CD8-positive, alpha-beta T cell (primary cell): ENCODE measurements at regions of chr4 and their contacts with region 1.

Region 1: DNA sequence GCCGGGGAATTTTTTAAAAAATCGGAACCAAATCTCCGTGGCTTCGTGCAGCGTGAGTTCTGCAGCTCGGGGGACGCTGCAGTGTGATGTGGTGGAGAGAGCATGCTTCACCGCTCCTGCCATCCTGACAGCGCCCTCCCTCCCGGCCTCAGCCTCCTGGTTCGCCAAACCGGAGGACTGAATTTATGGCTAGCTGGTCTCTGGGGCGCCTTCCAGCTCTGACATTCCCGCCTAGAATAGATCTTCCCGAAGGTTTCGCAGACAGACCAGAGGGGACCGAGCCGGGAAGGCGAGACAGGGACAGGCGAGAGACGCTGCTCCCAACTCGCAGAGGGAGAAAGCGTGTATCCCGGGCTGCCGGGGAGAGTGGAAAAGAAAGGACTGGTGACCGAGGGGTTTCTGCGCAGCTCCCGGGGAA is 25.9 kb downstream of the HOPX start:
- DNase-seq: peak in 5 of 9 experiments; percentile 17 to 62 (median 43)
- ATAC-seq: no peak
- H3K4me3 ChIP-seq: peak overlapping the region; percentile 61 to 78
- H3K4me3 Mint-ChIP-seq: peak overlapping the region; percentile 90
- H3K27ac ChIP-seq: peak overlapping the region in 1 of 2 experiments; percentile 73
- H3K27ac Mint-ChIP-seq: peak overlapping the region; percentile 41
- H3K4me1 ChIP-seq: peaks cover 28% of the 10 kb centered on the region
- H3K4me1 Mint-ChIP-seq: peaks cover 56% of the 10 kb centered on the region
- H3K27me3 ChIP-seq: no peaks in the 10 kb centered on the region
- H3K27me3 Mint-ChIP-seq: peaks cover 10% of the 10 kb centered on the region
- CTCF ChIP-seq: no peak

Region 2: GRCh38 chr4:56410235-56411062 is 244.8 kb before region 1 on chr4:
- CTCF ChIA-PET with region 1: no interaction called
- POLR2A ChIA-PET with region 1: no interaction called
- intact Hi-C with region 1: no loop called
- DNase-seq: no peak
- ATAC-seq: no peak
- H3K4me3 ChIP-seq: no peak overlapping the region
- H3K4me3 Mint-ChIP-seq: no peak overlapping the region
- H3K27ac ChIP-seq: no peak overlapping the region
- H3K27ac Mint-ChIP-seq: no peak overlapping the region
- H3K4me1 ChIP-seq: no peaks in the 10 kb centered on the region
- H3K4me1 Mint-ChIP-seq: peaks cover 14% of the 10 kb centered on the region
- H3K27me3 ChIP-seq: no peaks in the 10 kb centered on the region
- H3K27me3 Mint-ChIP-seq: no peaks in the 10 kb centered on the region
- CTCF ChIP-seq: no peak

Region 3: GRCh38 chr4:56424697-56425514 is 230.3 kb before region 1 on chr4:
- CTCF ChIA-PET with region 1: interaction called, 4 read pairs
- POLR2A ChIA-PET with region 1: no interaction called
- intact Hi-C with region 1: loop called (anchors 10 kb)
- DNase-seq: peak in 7 of 9 experiments; percentile 21 to 71 (median 52)
- ATAC-seq: peak; percentile 61
- H3K4me3 ChIP-seq: no peak overlapping the region
- H3K4me3 Mint-ChIP-seq: no peak overlapping the region
- H3K27ac ChIP-seq: no peak overlapping the region
- H3K27ac Mint-ChIP-seq: no peak overlapping the region
- H3K4me1 ChIP-seq: no peaks in the 10 kb centered on the region
- H3K4me1 Mint-ChIP-seq: peaks cover 8% of the 10 kb centered on the region
- H3K27me3 ChIP-seq: no peaks in the 10 kb centered on the region
- H3K27me3 Mint-ChIP-seq: no peaks in the 10 kb centered on the region
- CTCF ChIP-seq: peak; percentile 90

Region 4: GRCh38 chr4:56575820-56576429 is 79.3 kb before region 1 on chr4:
- CTCF ChIA-PET with region 1: interaction called, 7 read pairs
- POLR2A ChIA-PET with region 1: interaction called, 3 read pairs
- intact Hi-C with region 1: loop called in 1 of 2 experiments (anchors 2 kb)
- DNase-seq: peak in 2 of 9 experiments; percentile 35 to 52
- ATAC-seq: peak; percentile 36
- H3K4me3 ChIP-seq: no peak overlapping the region
- H3K4me3 Mint-ChIP-seq: no peak overlapping the region
- H3K27ac ChIP-seq: no peak overlapping the region
- H3K27ac Mint-ChIP-seq: no peak overlapping the region
- H3K4me1 ChIP-seq: no peaks in the 10 kb centered on the region
- H3K4me1 Mint-ChIP-seq: no peaks in the 10 kb centered on the region
- H3K27me3 ChIP-seq: no peaks in the 10 kb centered on the region
- H3K27me3 Mint-ChIP-seq: peaks cover 2% of the 10 kb centered on the region
- CTCF ChIP-seq: peak; percentile 15

Region 5: GRCh38 chr4:56630876-56631666 is 24.1 kb before region 1 on chr4:
- CTCF ChIA-PET with region 1: no interaction called
- POLR2A ChIA-PET with region 1: no interaction called
- intact Hi-C with region 1: no loop called
- DNase-seq: no peak
- ATAC-seq: no peak
- H3K4me3 ChIP-seq: no peak overlapping the region
- H3K4me3 Mint-ChIP-seq: no peak overlapping the region
- H3K27ac ChIP-seq: no peak overlapping the region
- H3K27ac Mint-ChIP-seq: no peak overlapping the region
- H3K4me1 ChIP-seq: no peaks in the 10 kb centered on the region
- H3K4me1 Mint-ChIP-seq: no peaks in the 10 kb centered on the region
- H3K27me3 ChIP-seq: no peaks in the 10 kb centered on the region
- H3K27me3 Mint-ChIP-seq: peaks cover 2% of the 10 kb centered on the region
- CTCF ChIP-seq: no peak

Region 6: DNA sequence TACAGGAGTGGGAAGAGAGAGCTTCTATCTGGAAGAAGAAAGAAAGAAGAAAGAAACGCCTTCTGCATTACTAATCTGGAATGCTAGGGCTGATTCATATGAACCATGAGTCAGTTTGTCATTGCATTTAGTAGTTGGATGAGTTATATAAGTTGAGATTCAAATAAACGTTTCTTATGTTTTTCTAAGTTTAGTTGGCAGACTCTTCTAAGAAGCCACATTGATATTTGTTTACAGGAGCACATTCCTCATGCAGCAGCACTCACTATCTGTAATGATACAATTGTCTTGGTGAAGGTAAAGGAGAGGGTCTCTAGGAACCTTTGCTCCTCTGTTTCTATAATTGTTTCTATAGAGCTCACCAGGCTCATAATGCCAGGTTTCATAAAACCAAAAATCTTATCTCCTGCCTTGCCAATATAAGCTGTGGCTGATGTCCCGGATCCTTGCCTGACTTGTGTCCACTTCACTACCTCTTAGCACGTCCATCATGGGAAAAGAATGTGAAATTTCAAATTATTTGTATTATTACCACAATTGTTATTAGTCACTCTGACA is 13.6 kb before region 1 on chr4:
- CTCF ChIA-PET with region 1: interaction called, 12 read pairs
- POLR2A ChIA-PET with region 1: no interaction called
- intact Hi-C with region 1: no loop called
- DNase-seq: no peak
- ATAC-seq: no peak
- H3K4me3 ChIP-seq: no peak overlapping the region
- H3K4me3 Mint-ChIP-seq: no peak overlapping the region
- H3K27ac ChIP-seq: no peak overlapping the region
- H3K27ac Mint-ChIP-seq: no peak overlapping the region
- H3K4me1 ChIP-seq: no peaks in the 10 kb centered on the region
- H3K4me1 Mint-ChIP-seq: peaks cover 11% of the 10 kb centered on the region
- H3K27me3 ChIP-seq: no peaks in the 10 kb centered on the region
- H3K27me3 Mint-ChIP-seq: no peaks in the 10 kb centered on the region
- CTCF ChIP-seq: no peak

Region 7: DNA sequence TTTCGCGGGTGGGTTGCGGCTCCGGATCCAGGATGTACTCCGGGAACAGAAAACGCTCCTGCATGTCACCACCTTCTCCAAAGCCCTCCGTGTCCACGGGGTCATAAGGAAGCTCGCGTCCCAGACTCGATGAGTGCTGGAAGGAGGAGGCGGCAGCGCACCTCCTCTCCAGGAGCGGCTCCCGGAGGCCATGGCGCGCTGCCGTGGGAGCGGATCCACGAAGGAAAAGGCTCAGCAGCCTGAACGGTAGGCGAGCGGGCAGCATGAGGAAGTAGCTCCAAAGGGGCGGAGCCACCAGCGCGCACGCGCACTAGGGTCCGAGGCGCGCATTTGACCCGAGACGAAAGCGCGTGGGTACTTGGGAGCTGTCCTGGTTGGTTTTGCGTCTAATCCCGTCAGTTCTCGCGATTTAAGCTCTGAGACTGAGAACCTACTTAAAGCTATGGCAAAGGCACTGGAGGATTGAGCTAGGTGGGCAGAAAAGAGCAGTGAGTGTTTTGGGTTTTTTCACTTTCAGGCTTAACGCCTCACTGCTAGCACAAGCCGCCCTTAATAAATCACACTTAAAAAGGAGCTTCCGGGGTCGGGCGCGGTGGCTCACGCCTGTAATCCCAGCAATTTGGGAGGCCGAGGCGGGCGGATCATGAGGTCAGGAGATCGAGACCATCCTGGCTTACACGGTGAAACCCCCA is 322.2 kb after region 1 on chr4 and contains the start of gene NOA1:
- CTCF ChIA-PET with region 1: no interaction called
- POLR2A ChIA-PET with region 1: no interaction called
- intact Hi-C with region 1: no loop called
- DNase-seq: peak; percentile 95 to 99 (median 97)
- ATAC-seq: peak; percentile 79
- H3K4me3 ChIP-seq: peak within 1 kb of the TSS; percentile 94 to 100
- H3K4me3 Mint-ChIP-seq: peak within 1 kb of the TSS; percentile 93
- H3K27ac ChIP-seq: peak within 1 kb of the TSS; percentile 78 to 84
- H3K27ac Mint-ChIP-seq: peak within 1 kb of the TSS; percentile 94
- H3K4me1 ChIP-seq: peaks cover 45% of the 10 kb centered on the region
- H3K4me1 Mint-ChIP-seq: peaks cover 56% of the 10 kb centered on the region
- H3K27me3 ChIP-seq: no peaks in the 10 kb centered on the region
- H3K27me3 Mint-ChIP-seq: no peaks in the 10 kb centered on the region
- CTCF ChIP-seq: no peak
- total RNA-seq, gene NOA1: 16.5 to 17.2 TPM